Naive thymus-derived CD4-positive, alpha-beta T cell (primary cell): ENCODE measurements at regions of chr17 and their contacts with region 1.

Region 1: DNA sequence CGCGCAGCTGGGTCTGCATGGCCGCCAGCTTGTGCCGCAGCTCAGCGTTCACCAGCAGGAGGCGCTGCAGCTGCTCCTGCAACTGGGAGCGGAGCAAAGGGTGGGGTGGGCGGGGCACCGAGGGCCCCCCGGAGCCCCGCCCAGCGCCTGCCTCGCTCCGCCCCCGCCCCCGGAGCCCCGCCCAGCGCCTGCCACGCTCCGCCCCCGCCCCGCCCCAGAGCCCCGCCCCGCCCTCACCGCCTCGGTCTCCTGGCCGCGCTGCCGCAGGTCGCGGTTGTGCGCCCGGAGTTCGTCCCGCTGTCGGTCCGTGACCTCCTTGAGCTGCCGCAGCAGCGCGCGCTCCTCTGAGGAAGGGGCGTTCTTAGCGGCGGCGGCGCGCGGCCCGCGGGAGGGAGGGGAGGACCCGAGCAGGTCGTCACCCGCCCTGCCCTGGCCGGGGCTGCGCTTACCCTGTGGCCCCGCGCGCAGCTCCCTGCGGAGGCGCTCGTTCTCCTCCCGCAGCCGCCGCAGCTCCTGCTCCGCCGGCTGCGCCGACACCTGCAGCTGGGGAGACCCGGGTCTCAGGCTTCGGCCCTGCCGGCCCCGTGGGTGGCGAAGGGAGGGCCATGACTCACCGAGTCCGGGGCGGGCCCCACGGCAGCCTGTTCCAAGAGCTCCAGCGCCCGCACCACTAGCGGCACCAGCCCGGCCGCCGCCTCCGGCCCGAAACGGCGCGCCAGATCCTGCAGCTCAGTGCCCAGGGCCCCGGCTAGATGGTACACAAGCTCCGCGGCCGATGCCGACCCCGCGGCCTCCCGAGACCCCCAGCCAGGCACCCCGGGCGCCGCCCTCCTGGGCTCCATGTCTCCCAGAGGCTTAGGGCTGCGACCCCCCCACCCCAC is 463 bp downstream of the RILP start:
- DNase-seq: peak; percentile 88 to 97 (median 93)
- ATAC-seq: peak; percentile 90
- H3K4me3 ChIP-seq: peak overlapping the region; percentile 64
- H3K4me3 Mint-ChIP-seq: peak overlapping the region; percentile 65 to 81 (median 74)
- H3K27ac ChIP-seq: peak overlapping the region; percentile 69
- H3K27ac Mint-ChIP-seq: peak overlapping the region in 5 of 9 donors; percentile 38 to 58 (median 55)
- H3K4me1 ChIP-seq: peaks cover 15 to 21% of the 10 kb centered on the region in 2 donors
- H3K4me1 Mint-ChIP-seq: peaks cover 0 to 38% (median 10%) of the 10 kb centered on the region in 7 donors
- H3K27me3 ChIP-seq: no peaks in the 10 kb centered on the region
- H3K27me3 Mint-ChIP-seq: no peaks in the 10 kb centered on the region

Region 2: GRCh38 chr17:1561400-1562175 is 87.6 kb before region 1 on chr17:
- CTCF ChIA-PET with region 1: interaction called, 3 read pairs
- POLR2A ChIA-PET with region 1: interaction called, 4 read pairs
- intact Hi-C with region 1: loop called in 1 of 2 experiments (anchors 1 kb)
- DNase-seq: peak in 8 of 9 donors; percentile 28 to 58 (median 36)
- ATAC-seq: peak; percentile 37
- H3K4me3 ChIP-seq: peak overlapping the region; percentile 39
- H3K4me3 Mint-ChIP-seq: peak overlapping the region; percentile 73 to 89 (median 82)
- H3K27ac ChIP-seq: peak overlapping the region; percentile 76
- H3K27ac Mint-ChIP-seq: peak overlapping the region in 8 of 9 donors; percentile 54 to 90 (median 76)
- H3K4me1 ChIP-seq: peaks cover 9 to 12% of the 10 kb centered on the region in 2 donors
- H3K4me1 Mint-ChIP-seq: peaks cover 25 to 54% (median 43%) of the 10 kb centered on the region in 7 donors
- H3K27me3 ChIP-seq: no peaks in the 10 kb centered on the region
- H3K27me3 Mint-ChIP-seq: peaks cover 0 to 13% (median 0%) of the 10 kb centered on the region in 5 donors

Region 3: DNA sequence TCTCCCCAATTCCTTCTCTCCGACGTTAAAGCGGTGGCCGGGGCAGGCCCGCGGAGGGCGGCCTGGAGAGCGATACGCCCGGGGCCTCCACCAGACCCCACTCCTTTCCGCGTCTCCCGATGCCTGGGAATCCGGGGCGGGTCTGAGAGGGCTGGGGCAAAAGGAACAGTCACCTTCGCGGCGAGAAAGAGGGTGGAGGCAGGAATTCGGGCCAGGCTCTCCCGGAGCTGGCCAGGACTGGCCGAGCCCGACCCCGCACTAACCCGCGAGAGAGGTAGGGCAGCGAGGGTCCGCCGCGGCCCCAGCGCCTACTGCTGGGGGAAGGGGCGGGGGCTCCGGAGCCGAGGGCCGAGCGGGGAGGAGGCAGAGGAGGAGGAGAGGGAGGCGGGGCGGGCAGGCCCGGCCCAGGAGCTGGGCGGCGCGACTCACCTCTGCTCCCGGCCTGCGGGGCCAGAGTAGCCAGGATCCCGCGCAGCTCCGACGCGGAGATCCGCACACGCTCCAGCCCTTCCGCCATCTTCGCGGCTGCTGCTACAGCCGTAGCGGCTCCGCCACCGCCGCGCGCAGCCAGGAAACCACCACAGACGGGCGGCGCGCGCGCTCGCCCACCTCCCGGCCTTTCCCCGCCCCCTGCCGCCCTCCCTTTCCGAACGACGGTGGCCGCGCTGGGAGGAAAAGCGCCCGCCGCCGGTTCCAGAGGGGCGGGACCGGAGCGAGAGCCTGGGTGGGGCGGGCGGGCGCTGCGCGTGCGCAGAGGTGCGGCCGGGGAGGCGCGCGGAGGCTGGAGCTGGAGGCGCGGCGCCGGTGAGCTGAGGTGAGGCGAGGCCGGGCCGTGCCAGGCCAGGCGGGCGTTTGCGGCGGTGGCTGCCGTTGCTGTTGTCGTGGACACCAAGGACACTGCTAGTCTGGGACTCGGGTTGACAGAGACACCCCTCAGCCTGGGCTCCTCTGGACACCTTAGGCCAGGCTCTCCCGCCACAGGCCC is 654.3 kb after region 1 on chr17 and contains the starts of genes SMG6 and SRR:
- CTCF ChIA-PET with region 1: no interaction called
- POLR2A ChIA-PET with region 1: no interaction called
- intact Hi-C with region 1: loop called (anchors 1 to 10 kb)
- DNase-seq: peak; percentile 87 to 95 (median 93)
- ATAC-seq: peak; percentile 97
- H3K4me3 ChIP-seq: peak within 1 kb of the TSS; percentile 87
- H3K4me3 Mint-ChIP-seq: peak within 1 kb of the TSS; percentile 90 to 98 (median 92)
- H3K27ac ChIP-seq: peak within 1 kb of the TSS; percentile 98
- H3K27ac Mint-ChIP-seq: peak within 1 kb of the TSS; percentile 76 to 95 (median 84)
- H3K4me1 ChIP-seq: peaks cover 9 to 13% of the 10 kb centered on the region in 2 donors
- H3K4me1 Mint-ChIP-seq: peaks cover 25 to 61% (median 47%) of the 10 kb centered on the region in 7 donors
- H3K27me3 ChIP-seq: no peaks in the 10 kb centered on the region
- H3K27me3 Mint-ChIP-seq: no peaks in the 10 kb centered on the region
- total RNA-seq, gene SMG6: 45.6 to 65.3 (median 55.8) TPM
- total RNA-seq, gene SRR: 3.1 to 16.0 (median 8.3) TPM